ENCODE measurements at regions of chr11 and their contacts with region 1.

Region 1: DNA sequence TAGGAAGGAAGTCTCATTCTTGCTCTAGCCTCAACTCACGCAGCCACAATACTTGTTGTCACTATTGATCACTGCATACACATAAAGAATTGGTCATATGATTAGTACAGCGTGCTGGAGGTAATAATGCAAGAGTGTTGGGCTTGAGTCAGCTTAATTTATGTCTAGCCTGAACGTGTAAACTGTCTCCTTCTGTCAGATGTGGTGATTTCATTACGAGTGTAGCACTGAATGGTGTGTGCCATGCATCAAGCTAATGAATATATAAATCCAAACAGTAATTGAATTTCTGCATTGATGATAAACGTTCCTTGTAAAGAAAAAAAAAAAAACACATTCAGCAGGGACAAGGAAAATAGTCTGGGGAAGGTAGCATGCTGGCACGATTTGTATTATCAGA is 396.2 kb upstream of the RAG2 start:
- DNase-seq: no peak
- H3K4me3 ChIP-seq: no peak overlapping the region
- H3K27ac ChIP-seq: no peak overlapping the region
- H3K4me1 ChIP-seq: no peaks in the 10 kb centered on the region
- CTCF ChIP-seq: no peak

Region 2: DNA sequence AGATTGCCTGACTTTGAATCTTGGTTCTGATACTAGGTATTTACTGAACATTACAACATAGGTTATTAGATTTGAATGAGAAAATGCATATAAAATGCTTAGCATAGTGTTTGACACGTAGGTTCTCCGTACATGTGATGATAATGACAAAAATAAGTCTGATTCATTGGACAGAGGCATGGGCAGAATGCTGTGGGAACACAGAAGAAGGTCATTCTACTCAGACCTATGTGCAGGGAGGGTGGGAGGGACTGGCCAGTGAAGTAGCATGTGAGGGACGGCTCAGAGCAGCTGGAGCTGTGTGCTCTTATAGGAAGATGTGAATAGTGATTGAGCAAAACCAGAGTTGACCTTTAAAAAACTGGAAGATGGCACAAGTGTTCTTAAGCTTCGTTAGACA is 139.3 kb before region 1 on chr11:
- CTCF ChIA-PET with region 1: no interaction called
- POLR2A ChIA-PET with region 1: no interaction called
- intact Hi-C with region 1: no loop called
- DNase-seq: no peak
- H3K4me3 ChIP-seq: no peak overlapping the region
- H3K27ac ChIP-seq: no peak overlapping the region
- H3K4me1 ChIP-seq: no peaks in the 10 kb centered on the region
- CTCF ChIP-seq: no peak

Region 3: DNA sequence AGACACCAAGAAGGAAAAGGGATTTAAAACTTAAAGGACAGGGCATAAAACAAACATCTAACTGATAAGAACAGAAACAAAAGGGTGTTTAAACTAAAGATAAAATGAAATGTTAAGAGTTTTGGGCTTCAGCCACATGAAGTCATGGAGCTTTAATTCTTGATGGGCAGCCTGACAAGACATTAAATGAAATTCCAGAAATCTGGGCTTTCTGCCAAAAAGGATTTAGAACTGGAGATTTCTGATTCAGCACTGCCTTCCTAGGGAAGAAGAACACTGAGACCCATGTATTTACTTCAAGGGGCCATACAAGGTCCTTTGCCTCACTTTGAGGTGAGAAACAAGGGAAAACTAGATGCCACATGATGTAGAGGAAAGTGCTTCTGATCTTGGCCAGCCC is 40.2 kb before region 1 on chr11:
- CTCF ChIA-PET with region 1: no interaction called
- POLR2A ChIA-PET with region 1: no interaction called
- intact Hi-C with region 1: loop called (anchors 1 kb)
- DNase-seq: no peak
- H3K4me3 ChIP-seq: no peak overlapping the region
- H3K27ac ChIP-seq: no peak overlapping the region
- H3K4me1 ChIP-seq: no peaks in the 10 kb centered on the region
- CTCF ChIP-seq: no peak

Region 4: DNA sequence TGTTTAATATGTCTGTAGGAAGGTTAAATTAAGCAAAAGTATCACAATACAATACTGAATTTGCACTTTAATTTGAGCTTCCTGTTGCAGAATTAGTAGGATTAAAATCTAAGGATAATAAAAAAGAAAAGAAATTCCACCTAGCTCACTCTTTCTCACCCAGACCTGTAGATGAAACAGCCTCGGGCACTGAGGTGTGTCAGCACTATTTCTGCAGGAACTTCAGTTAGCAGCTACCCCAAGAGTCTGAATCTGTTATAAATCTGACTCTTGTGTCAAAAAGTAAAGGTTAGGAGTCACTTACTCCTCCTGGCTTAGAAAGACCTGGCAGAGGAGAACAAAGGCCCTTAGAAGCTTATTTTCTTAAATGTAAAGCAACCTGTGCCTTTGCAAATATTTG is 67.2 kb after region 1 on chr11:
- CTCF ChIA-PET with region 1: no interaction called
- POLR2A ChIA-PET with region 1: no interaction called
- intact Hi-C with region 1: no loop called
- DNase-seq: no peak
- H3K4me3 ChIP-seq: no peak overlapping the region
- H3K27ac ChIP-seq: no peak overlapping the region
- H3K4me1 ChIP-seq: no peaks in the 10 kb centered on the region
- CTCF ChIP-seq: no peak

Measured in OCI-LY7 (cell line).